ENCODE measurements at regions of chr2 and their contacts with region 1.

Region 1: DNA sequence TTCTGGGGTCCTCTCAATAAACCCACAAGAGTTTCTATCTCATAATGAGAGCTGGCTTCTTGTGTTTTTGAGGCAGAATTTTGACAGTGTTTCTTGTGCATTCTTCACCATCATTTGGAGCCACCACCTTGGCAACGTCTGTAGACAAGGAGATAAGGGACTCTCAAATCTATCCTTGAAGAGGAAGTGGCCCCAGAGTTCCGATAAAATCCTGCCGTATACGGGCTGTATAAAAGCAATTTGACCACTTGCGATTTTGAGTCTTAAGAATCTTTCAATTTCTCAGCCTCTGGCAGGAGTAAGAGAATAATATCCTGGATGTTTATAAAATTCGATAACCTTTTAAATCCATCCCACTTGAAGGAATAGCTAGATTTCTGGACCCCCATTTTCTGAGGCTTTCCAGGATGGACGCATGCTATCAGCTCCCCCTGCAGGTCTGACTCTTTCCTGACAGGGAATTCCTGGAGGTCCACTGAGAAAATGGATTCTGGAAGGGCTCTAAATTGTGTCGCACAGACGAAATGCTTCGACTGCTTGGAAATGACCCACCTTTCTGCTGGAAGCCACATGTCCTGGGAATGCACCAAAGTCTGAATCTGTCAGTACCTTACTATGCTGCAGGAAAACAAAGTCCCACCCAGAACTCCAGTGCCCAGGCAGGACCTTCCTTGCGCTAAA is 54.1 kb downstream of the E2F6 start:
- DNase-seq: peak; percentile 37 to 77 (median 50)
- H3K4me3 ChIP-seq: peak overlapping the region in 1 of 4 donors; percentile 40
- H3K27ac ChIP-seq: no peak overlapping the region
- H3K4me1 ChIP-seq: peaks cover 0 to 12% of the 10 kb centered on the region in 2 donors
- H3K27me3 ChIP-seq: no peaks in the 10 kb centered on the region
- CTCF ChIP-seq: peak; percentile 62 to 91 (median 76)
- POLR2A ChIP-seq: no peak

Region 2: DNA sequence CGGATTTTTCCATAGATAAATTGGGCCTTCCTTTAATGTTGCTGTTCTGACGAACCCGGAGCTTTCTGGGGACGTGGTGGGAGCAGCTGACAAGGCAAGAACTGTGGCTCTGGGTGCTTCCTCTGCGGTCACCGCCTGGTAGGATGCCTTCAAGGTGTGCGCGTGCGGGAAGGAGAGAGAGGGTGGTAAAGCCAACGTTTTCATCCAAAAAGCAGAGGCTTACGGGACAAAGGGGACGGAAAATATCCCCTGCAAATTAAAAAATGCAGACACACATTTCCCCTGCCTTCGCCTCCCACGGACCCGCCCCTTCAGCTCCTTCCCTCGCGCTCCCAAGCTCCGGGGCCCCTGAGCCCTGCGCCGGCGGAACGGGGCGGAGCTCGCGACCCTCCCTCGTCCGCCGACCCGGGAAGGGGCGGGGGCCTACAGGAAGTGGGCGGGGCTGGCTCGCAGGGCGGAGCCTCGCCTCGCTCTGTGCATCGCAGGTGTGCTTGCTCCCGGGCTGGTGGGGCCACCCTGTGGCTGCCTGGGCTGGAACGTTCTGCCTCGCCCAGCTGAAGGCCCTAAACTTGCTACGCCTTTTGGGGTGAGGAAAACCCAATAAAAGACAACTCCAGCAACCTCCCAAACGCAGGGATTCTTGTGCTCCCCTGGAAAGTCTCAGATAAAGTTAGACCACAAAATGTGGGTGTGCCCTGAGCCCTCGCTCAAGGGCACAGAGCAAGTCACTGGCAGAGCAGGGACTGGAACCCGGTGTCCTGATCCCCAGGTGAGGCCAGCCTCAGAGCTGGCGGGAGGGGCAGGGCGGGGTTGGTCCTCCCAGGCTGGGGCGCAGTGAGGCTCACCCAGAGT is 282.1 kb before region 1 on chr2:
- intact Hi-C with region 1: loop called (anchors 5 to 10 kb)
- DNase-seq: peak in 4 of 7 donors; percentile 44 to 50 (median 48)
- H3K4me3 ChIP-seq: peak overlapping the region in 2 of 4 donors; percentile 6 to 54
- H3K27ac ChIP-seq: peak overlapping the region in 2 of 5 donors; percentile 7 to 21
- H3K4me1 ChIP-seq: peaks cover 16 to 19% of the 10 kb centered on the region in 2 donors
- H3K27me3 ChIP-seq: no peaks in the 10 kb centered on the region
- CTCF ChIP-seq: peak in 3 of 6 experiments; percentile 11 to 35 (median 17)
- POLR2A ChIP-seq: no peak

Region 3: GRCh38 chr2:11234309-11234708 is 177.6 kb before region 1 on chr2:
- intact Hi-C with region 1: loop called (anchors 2 to 5 kb)
- DNase-seq: no peak
- H3K4me3 ChIP-seq: no peak overlapping the region
- H3K27ac ChIP-seq: no peak overlapping the region
- H3K4me1 ChIP-seq: peaks cover 0 to 9% of the 10 kb centered on the region in 2 donors
- H3K27me3 ChIP-seq: no peaks in the 10 kb centered on the region
- CTCF ChIP-seq: peak; percentile 36 to 72 (median 58)
- POLR2A ChIP-seq: no peak

Region 4: DNA sequence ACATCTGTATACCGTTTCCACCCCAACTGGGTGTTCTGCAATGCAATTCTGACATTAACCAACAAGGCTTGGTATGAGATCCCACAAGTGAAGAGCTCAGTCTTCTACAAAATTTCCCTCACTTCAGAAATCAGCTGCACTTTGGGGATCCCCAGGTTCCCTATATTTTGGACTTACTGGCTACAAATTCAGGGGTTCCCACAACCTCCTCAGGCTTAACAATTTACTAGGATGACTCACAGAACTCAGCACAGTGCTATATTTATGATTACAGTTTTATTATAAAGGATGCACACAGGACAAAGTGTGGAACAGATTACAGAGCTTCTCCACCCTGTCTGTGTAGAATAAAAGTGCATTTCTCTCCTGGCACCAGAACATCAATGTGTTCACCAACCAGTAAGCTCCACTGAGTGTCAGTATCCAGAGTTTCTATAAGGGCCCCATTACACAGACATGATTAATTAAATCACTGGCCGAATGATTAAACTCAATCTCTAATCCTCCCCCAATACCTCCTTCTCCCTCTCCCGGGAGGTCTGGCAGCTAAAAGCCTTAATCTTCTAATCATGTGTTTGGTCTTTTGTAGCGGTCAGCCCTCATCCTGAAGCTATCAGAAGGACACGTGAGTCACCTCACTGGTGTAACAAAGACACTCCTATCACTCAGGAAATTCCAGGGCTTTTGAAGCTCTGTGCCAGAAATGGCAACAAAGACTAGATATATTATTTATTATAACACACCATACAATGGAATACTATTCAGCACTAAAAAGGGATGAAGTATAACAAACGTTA is 172.0 kb before region 1 on chr2:
- intact Hi-C with region 1: loop called (anchors 2 to 5 kb)
- DNase-seq: peak in 5 of 7 donors; percentile 13 to 36 (median 21)
- H3K4me3 ChIP-seq: no peak overlapping the region
- H3K27ac ChIP-seq: no peak overlapping the region
- H3K4me1 ChIP-seq: peaks cover 0 to 9% of the 10 kb centered on the region in 2 donors
- H3K27me3 ChIP-seq: no peaks in the 10 kb centered on the region
- CTCF ChIP-seq: no peak
- POLR2A ChIP-seq: no peak

Region 5: GRCh38 chr2:11344342-11344955 is 67.5 kb before region 1 on chr2 and contains the start of gene ROCK2:
- intact Hi-C with region 1: loop called in 1 of 2 experiments (anchors 5 kb)
- DNase-seq: peak; percentile 84 to 91 (median 88)
- H3K4me3 ChIP-seq: peak within 1 kb of the TSS; percentile 53 to 95 (median 72)
- H3K27ac ChIP-seq: peak within 1 kb of the TSS; percentile 66 to 100 (median 96)
- H3K4me1 ChIP-seq: peaks cover 10 to 35% of the 10 kb centered on the region in 2 donors
- H3K27me3 ChIP-seq: no peaks in the 10 kb centered on the region
- CTCF ChIP-seq: no peak
- POLR2A ChIP-seq: peak; percentile 45 to 73
- total RNA-seq, gene ROCK2: 23.9 to 46.6 (median 30.7) TPM

Measured in adrenal gland (tissue), 19 donors.